ENCODE measurements at regions of chr15 and their contacts with region 1.

Region 1: DNA sequence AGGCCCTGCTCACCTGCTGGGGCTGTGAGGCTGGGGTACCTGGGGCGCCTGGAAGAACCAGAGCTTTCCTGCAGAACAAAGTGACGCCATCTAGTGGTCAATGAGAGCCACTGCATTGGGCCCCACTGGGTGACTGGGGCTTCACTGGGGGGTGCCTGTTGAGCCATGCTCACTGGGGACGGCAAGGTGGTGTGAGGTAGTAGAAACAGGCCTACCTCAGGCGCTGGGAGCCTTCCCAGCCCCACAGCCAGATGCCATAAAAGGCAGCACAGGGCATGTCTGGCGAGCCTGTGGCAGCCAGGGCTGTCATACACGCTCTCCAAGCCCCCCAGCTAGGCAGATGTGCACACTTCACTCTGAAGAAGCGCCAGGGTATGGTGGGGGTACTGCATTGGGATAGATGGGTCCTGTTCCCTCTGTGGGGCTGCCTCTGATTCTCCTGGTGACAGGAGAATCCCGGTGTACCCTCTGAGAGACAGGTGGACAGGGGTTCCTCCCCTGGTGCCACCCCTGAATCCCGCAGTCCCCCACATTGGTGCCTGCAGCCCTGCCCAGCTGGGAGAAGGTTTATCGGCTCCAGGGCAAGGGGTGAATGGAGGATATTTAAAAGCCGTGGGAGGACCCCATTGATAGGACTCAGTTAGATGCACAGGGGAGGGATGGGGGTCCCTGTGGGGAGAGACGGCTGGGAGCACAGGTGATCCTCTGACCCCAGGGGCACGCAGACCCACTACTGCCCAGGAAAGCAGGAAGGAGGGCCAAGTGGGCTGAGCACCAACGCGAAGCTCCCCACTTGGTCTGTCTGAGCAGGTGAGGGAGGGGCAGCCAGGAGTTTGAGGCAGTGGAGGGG is 178.8 kb downstream of the NSMCE3 start:
- DNase-seq: peak; percentile 78
- ATAC-seq: peak; percentile 73
- H3K4me3 Mint-ChIP-seq: peak overlapping the region; percentile 68
- H3K27ac Mint-ChIP-seq: peak overlapping the region; percentile 91
- H3K4me1 Mint-ChIP-seq: peaks cover 27% of the 10 kb centered on the region
- H3K27me3 Mint-ChIP-seq: no peaks in the 10 kb centered on the region

Region 2: DNA sequence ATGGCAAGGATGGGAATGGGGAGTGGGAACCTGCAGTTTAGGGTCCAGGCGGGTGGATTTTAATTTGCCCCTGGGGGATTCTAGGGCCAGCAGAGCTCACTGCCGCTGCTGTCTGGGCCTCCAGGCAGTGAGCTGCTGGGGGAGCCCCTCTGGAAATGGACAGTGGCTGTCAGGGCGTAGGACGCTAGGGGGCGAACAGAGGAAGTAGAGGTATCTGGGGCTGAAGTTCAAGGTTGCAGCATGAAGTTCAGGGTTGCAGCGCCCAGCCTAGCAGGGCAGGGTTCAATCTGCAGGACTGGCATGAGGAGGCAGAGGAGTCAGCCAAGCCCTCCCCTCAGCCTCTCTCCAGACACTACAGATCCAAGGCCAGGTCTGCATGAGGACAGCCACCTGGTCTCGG is 155.5 kb before region 1 on chr15:
- CTCF ChIA-PET with region 1: interaction called, 13 read pairs
- DNase-seq: peak; percentile 78
- ATAC-seq: peak; percentile 72
- H3K4me3 Mint-ChIP-seq: no peak overlapping the region
- H3K27ac Mint-ChIP-seq: no peak overlapping the region
- H3K4me1 Mint-ChIP-seq: peaks cover 40% of the 10 kb centered on the region
- H3K27me3 Mint-ChIP-seq: no peaks in the 10 kb centered on the region

Region 3: GRCh38 chr15:28975766-28976179 is 115.1 kb before region 1 on chr15:
- CTCF ChIA-PET with region 1: interaction called, 19 read pairs
- DNase-seq: peak; percentile 78
- ATAC-seq: peak; percentile 75
- H3K4me3 Mint-ChIP-seq: no peak overlapping the region
- H3K27ac Mint-ChIP-seq: no peak overlapping the region
- H3K4me1 Mint-ChIP-seq: peaks cover 20% of the 10 kb centered on the region
- H3K27me3 Mint-ChIP-seq: no peaks in the 10 kb centered on the region

Region 4: GRCh38 chr15:28994831-28995596 is 95.8 kb before region 1 on chr15:
- CTCF ChIA-PET with region 1: interaction called, 24 read pairs
- DNase-seq: no peak
- ATAC-seq: peak; percentile 28
- H3K4me3 Mint-ChIP-seq: no peak overlapping the region
- H3K27ac Mint-ChIP-seq: peak overlapping the region; percentile 83
- H3K4me1 Mint-ChIP-seq: peaks cover 37% of the 10 kb centered on the region
- H3K27me3 Mint-ChIP-seq: no peaks in the 10 kb centered on the region

Region 5: GRCh38 chr15:29050870-29051269 is 40.0 kb before region 1 on chr15:
- CTCF ChIA-PET with region 1: interaction called, 11 read pairs
- DNase-seq: peak; percentile 60
- ATAC-seq: peak; percentile 87
- H3K4me3 Mint-ChIP-seq: no peak overlapping the region
- H3K27ac Mint-ChIP-seq: peak overlapping the region; percentile 35
- H3K4me1 Mint-ChIP-seq: peaks cover 22% of the 10 kb centered on the region
- H3K27me3 Mint-ChIP-seq: no peaks in the 10 kb centered on the region

Region 6: GRCh38 chr15:29062179-29062591 is 28.7 kb before region 1 on chr15:
- CTCF ChIA-PET with region 1: no interaction called
- DNase-seq: no peak
- ATAC-seq: no peak
- H3K4me3 Mint-ChIP-seq: no peak overlapping the region
- H3K27ac Mint-ChIP-seq: no peak overlapping the region
- H3K4me1 Mint-ChIP-seq: peaks cover 11% of the 10 kb centered on the region
- H3K27me3 Mint-ChIP-seq: no peaks in the 10 kb centered on the region